ENCODE measurements at regions of chr1 and their contacts with region 1.

Region 1: GRCh38 chr1:227563324-227564201 is at the start of gene ZNF678:
- DNase-seq: peak; percentile 94
- H3K4me3 ChIP-seq: peak within 1 kb of the TSS; percentile 83 to 99 (median 88)
- H3K27ac ChIP-seq: peak within 1 kb of the TSS; percentile 90
- H3K4me1 ChIP-seq: peaks cover 6% of the 10 kb centered on the region
- H3K27me3 ChIP-seq: no peaks in the 10 kb centered on the region
- CTCF ChIP-seq: no peak
- total RNA-seq, gene ZNF678: 4.1 to 5.8 TPM

Region 2: GRCh38 chr1:227016990-227017389 is 546.6 kb before region 1 on chr1:
- CTCF ChIA-PET with region 1: no interaction called
- dilution Hi-C with region 1: no loop called
- in situ Hi-C with region 1: no loop called
- intact Hi-C with region 1: no loop called
- DNase-seq: no peak
- H3K4me3 ChIP-seq: no peak overlapping the region
- H3K27ac ChIP-seq: no peak overlapping the region
- H3K4me1 ChIP-seq: no peaks in the 10 kb centered on the region
- H3K27me3 ChIP-seq: no peaks in the 10 kb centered on the region
- CTCF ChIP-seq: no peak

Region 3: DNA sequence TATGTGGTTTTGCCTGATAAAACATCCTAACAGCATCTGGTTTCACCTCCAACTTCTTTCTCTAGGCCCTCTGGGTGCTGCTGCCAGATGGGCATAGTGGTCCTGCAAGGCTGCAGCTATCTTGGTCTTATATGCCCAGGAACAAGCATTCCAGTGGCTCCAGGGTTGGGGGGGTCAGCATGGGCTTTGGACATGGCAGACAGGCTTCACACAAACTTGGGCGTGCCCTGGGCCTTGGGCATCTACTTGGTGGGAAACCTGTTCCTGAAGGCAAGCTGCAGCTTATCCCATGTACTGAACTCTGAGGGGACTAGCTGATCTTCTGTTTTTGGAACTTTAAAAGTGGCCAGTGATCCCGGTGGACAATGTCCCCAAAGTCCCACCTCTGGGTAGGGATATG is 55.1 kb before region 1 on chr1:
- CTCF ChIA-PET with region 1: no interaction called
- dilution Hi-C with region 1: loop called (anchors 5 kb)
- in situ Hi-C with region 1: no loop called
- intact Hi-C with region 1: no loop called
- DNase-seq: no peak
- H3K4me3 ChIP-seq: no peak overlapping the region
- H3K27ac ChIP-seq: no peak overlapping the region
- H3K4me1 ChIP-seq: no peaks in the 10 kb centered on the region
- H3K27me3 ChIP-seq: no peaks in the 10 kb centered on the region
- CTCF ChIP-seq: no peak

Region 4: DNA sequence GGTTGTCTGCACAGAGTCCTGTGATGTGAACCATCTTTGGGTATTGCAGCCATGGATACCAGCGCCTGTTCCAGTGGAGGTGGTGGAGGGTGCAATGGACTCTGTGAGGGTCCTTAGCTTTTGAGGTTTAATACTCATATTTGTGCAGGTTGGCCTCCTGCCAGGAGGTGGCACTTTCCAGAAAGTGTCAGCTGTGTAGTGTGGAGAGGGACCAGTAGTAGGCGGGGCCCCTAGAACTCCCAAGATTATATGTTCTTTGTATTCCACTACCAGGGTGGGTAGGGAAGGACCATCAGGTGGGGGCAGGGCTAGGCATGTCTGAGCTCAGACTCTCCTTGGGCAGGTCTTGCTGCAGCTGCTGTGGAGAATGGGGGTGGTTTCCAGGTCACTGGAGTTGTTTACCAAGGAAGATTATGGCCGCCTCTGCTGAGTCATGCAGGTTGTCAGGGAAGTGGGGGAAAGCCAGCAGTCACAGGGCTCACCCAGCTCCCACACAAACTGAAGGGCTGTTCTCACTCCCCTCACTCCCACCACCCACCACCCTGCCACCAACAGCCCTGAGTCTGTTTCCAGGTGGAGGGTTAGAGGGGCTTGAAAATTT is 31.4 kb before region 1 on chr1:
- CTCF ChIA-PET with region 1: no interaction called
- dilution Hi-C with region 1: no loop called
- in situ Hi-C with region 1: no loop called
- intact Hi-C with region 1: no loop called
- DNase-seq: no peak
- H3K4me3 ChIP-seq: no peak overlapping the region
- H3K27ac ChIP-seq: no peak overlapping the region
- H3K4me1 ChIP-seq: no peaks in the 10 kb centered on the region
- H3K27me3 ChIP-seq: no peaks in the 10 kb centered on the region
- CTCF ChIP-seq: no peak

Region 5: GRCh38 chr1:227542143-227543120 is 21.1 kb before region 1 on chr1:
- CTCF ChIA-PET with region 1: no interaction called
- dilution Hi-C with region 1: no loop called
- in situ Hi-C with region 1: no loop called
- intact Hi-C with region 1: loop called (anchors 1 kb)
- DNase-seq: peak; percentile 65
- H3K4me3 ChIP-seq: peak overlapping the region; percentile 50 to 75 (median 69)
- H3K27ac ChIP-seq: no peak overlapping the region
- H3K4me1 ChIP-seq: peaks cover 9% of the 10 kb centered on the region
- H3K27me3 ChIP-seq: no peaks in the 10 kb centered on the region
- CTCF ChIP-seq: peak; percentile 48 to 76

Region 6: GRCh38 chr1:227576189-227576588 is 12.6 kb after region 1 on chr1:
- CTCF ChIA-PET with region 1: no interaction called
- dilution Hi-C with region 1: no loop called
- in situ Hi-C with region 1: no loop called
- intact Hi-C with region 1: no loop called
- DNase-seq: no peak
- H3K4me3 ChIP-seq: no peak overlapping the region
- H3K27ac ChIP-seq: no peak overlapping the region
- H3K4me1 ChIP-seq: no peaks in the 10 kb centered on the region
- H3K27me3 ChIP-seq: no peaks in the 10 kb centered on the region
- CTCF ChIP-seq: no peak

Region 7: DNA sequence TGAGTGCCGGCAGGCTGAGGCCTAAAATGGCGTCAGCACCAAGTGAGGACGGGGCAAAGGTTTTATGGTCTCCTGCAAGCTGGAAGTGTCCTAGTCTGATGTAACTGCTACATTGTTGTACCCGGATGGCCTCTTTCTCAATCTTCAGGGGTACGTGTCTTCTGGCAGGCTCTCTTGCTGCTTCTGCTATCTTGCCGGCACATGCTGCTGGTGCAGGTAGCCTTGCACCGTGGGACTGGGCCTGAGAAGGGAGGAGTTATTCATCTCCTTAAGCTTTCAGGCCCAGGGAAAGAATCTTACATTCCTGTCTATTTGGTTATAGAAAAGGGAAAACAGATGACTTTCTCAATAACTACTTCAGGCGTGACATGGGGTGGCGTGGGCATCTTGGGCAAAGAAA is 72.0 kb after region 1 on chr1:
- CTCF ChIA-PET with region 1: no interaction called
- dilution Hi-C with region 1: loop called (anchors 5 kb)
- in situ Hi-C with region 1: no loop called
- intact Hi-C with region 1: no loop called
- DNase-seq: no peak
- H3K4me3 ChIP-seq: no peak overlapping the region
- H3K27ac ChIP-seq: no peak overlapping the region
- H3K4me1 ChIP-seq: no peaks in the 10 kb centered on the region
- H3K27me3 ChIP-seq: no peaks in the 10 kb centered on the region
- CTCF ChIP-seq: no peak

Region 8: DNA sequence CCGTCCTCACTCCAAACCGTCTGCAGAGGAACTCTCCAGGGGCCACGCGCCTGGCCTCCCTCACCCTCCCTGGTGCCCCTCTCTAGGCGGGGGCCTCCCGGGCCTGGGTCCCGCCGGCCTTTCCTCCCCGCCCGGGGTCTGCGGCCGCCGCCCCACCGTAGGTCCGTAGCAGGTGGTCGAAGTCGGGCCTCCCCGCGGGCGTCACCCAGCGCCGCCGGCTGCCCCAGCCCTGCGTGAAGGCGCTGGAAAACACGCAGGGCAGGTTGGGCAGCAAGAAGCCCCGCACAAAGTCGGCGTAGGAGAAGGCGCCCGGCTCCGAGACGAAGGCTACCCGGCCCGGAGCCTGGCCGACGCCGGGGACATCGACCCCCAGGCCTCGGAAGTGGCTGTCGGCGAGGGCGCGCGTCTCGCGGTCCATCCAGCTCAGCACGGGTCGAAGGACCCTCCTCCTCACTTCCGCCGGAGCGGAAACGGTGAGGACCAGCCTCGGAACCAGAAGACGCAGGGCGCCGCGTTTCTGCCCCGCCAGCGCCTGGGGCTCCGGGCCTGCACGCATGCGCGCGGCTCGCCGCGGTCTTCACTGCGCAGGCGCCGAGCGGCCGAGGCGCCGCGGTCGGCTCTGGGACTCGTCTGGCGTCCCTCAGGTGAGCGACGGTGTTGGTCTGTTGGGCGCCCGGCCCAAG is 171.4 kb after region 1 on chr1 and contains the starts of genes JMJD4 and SNAP47:
- CTCF ChIA-PET with region 1: no interaction called
- dilution Hi-C with region 1: no loop called
- in situ Hi-C with region 1: no loop called
- intact Hi-C with region 1: loop called (anchors 1 kb)
- DNase-seq: peak; percentile 88
- H3K4me3 ChIP-seq: peak within 1 kb of the TSS; percentile 74 to 81 (median 78)
- H3K27ac ChIP-seq: peak within 1 kb of the TSS; percentile 51
- H3K4me1 ChIP-seq: peaks cover 12% of the 10 kb centered on the region
- H3K27me3 ChIP-seq: no peaks in the 10 kb centered on the region
- CTCF ChIP-seq: no peak
- total RNA-seq, gene JMJD4: 20.9 to 24.7 TPM
- total RNA-seq, gene SNAP47: 24.9 to 41.7 TPM

Measured in mammary epithelial cell (primary cell).